Posterior cingulate gyrus (tissue), 11 donors: ENCODE measurements at regions of chr22 and their contacts with region 1.

Region 1: GRCh38 chr22:37334859-37335805 is 52.8 kb downstream of the CYTH4 start:
- DNase-seq: no peak

Region 2: GRCh38 chr22:37428649-37429586 is 93.8 kb after region 1 on chr22:
- intact Hi-C with region 1: loop called (anchors 5 kb)
- DNase-seq: peak in 4 of 10 donors; percentile 54 to 88 (median 74)